ENCODE measurements at regions of chr17 and their contacts with region 1.

Region 1: DNA sequence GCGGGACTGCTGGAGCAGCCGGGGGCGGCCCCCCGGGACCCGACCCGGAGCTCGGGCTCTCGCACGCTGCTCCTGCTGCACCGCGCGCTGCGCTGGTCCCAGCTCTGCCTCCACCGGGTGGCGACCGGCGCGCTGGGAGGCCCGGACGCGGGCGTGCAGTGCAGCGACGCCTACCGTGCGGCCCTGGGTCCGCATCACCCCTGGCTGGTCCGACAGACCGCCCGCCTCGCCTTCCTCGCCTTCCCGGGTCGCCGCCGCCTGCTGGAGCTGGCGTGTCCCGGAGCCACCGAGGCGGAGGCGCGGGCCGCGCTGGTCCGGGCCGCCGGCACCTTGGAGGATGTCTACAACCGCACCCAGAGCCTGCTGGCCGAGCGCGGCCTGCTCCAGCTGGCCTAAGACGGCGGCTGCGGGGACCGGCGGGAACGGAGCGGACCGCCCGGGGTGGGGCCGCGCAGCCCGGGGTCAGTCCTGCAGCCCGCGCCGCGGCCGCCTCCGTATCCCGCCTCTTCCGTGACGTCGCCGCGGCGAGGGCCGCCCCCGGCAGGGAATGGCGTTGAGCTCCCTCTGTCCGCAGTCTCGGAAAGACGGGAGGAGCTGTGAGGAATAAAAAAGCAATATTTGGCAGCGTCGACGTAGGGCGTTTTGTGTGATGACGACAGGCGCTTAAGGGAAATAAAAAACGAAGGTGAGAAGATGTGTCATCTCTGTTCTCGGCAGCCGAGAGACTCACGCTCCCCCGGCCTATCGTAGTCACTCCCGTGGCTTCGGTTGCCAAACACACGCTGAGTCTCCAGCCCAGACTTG is 1.3 kb downstream of the GLTPD2 start:
- DNase-seq: peak; percentile 97
- H3K4me3 ChIP-seq: peak overlapping the region; percentile 88
- H3K27ac ChIP-seq: peak overlapping the region; percentile 81
- H3K4me1 ChIP-seq: peaks cover 19% of the 10 kb centered on the region; the same call in 1 of the 2 replicates
- H3K27me3 ChIP-seq: no peaks in the 10 kb centered on the region

Region 2: GRCh38 chr17:4881761-4882555 is 91.9 kb after region 1 on chr17:
- in situ Hi-C with region 1: loop called (anchors 10 kb)
- DNase-seq: peak; percentile 64
- H3K4me3 ChIP-seq: no peak overlapping the region
- H3K27ac ChIP-seq: no peak overlapping the region
- H3K4me1 ChIP-seq: no peaks in the 10 kb centered on the region
- H3K27me3 ChIP-seq: no peaks in the 10 kb centered on the region

Region 3: GRCh38 chr17:5219551-5219950 is 429.4 kb after region 1 on chr17:
- in situ Hi-C with region 1: no loop called
- DNase-seq: no peak
- H3K4me3 ChIP-seq: no peak overlapping the region
- H3K27ac ChIP-seq: no peak overlapping the region
- H3K4me1 ChIP-seq: no peaks in the 10 kb centered on the region
- H3K27me3 ChIP-seq: no peaks in the 10 kb centered on the region

Measured in GM23248 (cell line).